Prostate gland (tissue), 2 donors: ENCODE measurements at regions of chrX and their contacts with region 1.

Region 1: DNA sequence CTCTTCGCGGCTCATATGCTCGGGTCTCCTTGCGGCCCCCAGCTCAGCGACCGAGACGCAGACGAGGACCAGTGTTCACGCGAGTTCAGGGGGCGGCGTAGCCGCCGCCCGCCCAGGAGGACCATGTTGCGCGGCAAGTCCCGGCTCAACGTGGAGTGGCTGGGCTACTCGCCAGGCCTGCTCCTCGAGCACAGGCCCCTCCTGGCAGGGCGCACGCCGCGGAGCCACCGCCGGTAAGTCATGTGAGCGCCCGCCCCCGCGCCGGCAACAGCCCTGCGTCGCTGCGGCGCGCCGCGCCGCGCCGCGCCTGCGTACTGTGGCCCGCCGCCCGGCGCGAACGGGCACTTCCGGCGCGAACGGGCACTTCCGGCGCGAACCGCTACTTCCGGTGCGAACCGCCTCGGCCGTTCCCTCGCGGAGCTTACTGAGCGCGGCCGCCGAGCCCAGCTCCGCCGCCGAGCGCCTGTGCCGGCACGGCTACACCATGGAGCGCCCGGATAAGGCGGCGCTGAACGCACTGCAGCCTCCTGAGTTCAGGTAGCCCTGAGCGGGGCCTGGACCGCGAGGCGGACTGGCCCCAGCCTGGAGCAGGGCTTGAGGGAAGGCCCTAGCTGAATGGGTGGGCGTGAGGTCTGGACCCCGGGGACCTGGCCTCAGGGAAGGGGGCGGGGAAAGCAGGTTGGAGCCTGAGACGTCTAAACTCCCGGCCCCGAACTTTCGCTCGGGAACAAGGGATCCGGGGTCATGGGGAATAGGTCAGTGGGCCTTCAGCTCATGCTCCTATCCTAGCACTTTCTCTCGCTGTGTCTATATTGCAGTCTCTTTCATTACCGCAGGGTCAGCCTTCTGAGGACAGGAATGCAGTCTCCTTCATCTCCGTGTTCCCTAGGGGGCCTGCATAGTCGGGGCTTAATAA is at the start of gene VMA21:
- DNase-seq: peak; percentile 77
- H3K4me3 ChIP-seq: peak within 1 kb of the TSS; percentile 53 to 59
- H3K27ac ChIP-seq: peak within 1 kb of the TSS; percentile 80 to 81
- H3K4me1 ChIP-seq: no peaks in the 10 kb centered on the region
- H3K27me3 ChIP-seq: no peaks in the 10 kb centered on the region
- CTCF ChIP-seq: no peak
- POLR2A ChIP-seq: no peak
- total RNA-seq, gene VMA21: 33.8 to 42.0 TPM

Region 2: DNA sequence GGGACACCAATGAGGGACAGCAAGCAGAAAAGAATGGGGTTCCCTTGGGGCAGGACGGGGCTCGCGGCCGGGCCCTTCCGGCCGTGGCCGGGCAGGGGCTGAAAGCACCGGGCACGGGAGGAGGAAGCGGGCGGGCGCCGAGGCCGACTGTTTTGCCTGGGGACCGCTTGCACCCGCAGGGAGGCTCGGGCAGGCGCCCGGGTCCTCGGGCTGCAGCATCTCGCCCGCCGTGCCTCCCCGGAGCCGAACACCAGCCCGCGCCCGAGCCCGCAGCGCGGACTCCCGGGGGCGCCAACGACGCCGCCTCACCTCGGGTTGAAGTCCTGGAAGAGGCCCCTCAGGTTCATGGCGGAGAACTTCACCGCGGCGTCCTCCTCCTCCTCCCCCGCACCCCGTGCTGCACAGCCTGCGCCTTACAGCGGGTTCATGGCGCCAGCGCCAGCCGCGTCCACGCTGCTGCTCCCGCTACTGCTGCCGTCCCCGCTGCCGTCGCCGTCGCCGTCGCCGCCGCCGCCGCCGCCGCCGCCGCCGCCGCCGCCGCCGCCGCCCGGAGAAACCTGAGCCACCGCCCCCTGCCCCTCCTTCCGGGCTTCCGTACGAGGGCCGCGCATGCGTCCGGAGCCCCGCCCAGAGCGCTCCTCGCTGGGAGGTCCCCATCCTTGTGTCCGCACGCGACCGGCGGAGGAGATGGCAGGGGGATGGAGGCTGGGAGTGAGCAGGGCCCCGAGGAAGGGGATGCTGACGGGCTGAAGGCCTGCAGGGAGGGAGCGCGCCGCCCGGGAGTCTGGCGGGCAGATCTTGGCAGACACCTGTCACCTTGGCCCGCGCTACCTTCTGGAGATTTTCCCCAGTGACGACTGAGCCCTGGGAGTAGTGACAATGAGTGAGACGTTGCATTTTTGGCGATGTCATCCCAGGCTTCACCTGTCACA is 1765.6 kb before region 1 on chrX and contains the start of gene TMEM185A:
- intact Hi-C with region 1: loop called (anchors 10 kb)
- DNase-seq: peak; percentile 45
- H3K4me3 ChIP-seq: peak within 1 kb of the TSS; percentile 56 to 61
- H3K27ac ChIP-seq: peak within 1 kb of the TSS; percentile 61 to 69
- H3K4me1 ChIP-seq: no peaks in the 10 kb centered on the region
- H3K27me3 ChIP-seq: no peaks in the 10 kb centered on the region
- CTCF ChIP-seq: no peak
- POLR2A ChIP-seq: no peak
- total RNA-seq, gene TMEM185A: 18.4 to 53.2 TPM

Region 3: DNA sequence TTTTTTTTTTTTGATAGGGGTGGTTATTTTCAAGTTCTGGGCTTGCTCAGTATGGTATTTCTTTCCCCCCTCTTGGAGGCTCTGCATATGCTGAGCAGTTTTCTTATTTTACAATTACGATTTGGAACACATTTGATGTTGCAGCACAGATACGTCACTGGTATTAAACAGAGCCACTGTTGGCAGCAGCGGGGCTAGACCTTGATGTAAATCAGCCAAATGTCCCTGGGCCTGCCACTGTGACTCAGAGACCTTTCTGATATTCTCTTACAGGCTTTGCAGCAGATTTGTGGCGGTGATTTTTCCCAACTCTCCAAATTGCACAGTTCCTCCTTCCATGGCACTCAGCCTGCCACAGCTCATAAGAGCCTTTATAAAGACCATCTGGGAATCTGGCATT is 81.0 kb after region 1 on chrX:
- intact Hi-C with region 1: no loop called
- DNase-seq: no peak
- H3K4me3 ChIP-seq: no peak overlapping the region
- H3K27ac ChIP-seq: no peak overlapping the region
- H3K4me1 ChIP-seq: no peaks in the 10 kb centered on the region
- H3K27me3 ChIP-seq: no peaks in the 10 kb centered on the region
- CTCF ChIP-seq: no peak
- POLR2A ChIP-seq: no peak

Region 4: GRCh38 chrX:151609222-151609621 is 212.1 kb after region 1 on chrX:
- intact Hi-C with region 1: no loop called
- DNase-seq: no peak
- H3K4me3 ChIP-seq: no peak overlapping the region
- H3K27ac ChIP-seq: no peak overlapping the region
- H3K4me1 ChIP-seq: no peaks in the 10 kb centered on the region
- H3K27me3 ChIP-seq: no peaks in the 10 kb centered on the region
- CTCF ChIP-seq: no peak
- POLR2A ChIP-seq: no peak